ENCODE measurements at regions of chr15 and their contacts with region 1.

Region 1: GRCh38 chr15:55897560-55898336 is 95.7 kb downstream of the NEDD4 start:
- DNase-seq: no peak
- H3K4me3 ChIP-seq: no peak overlapping the region
- H3K27me3 ChIP-seq: no peaks in the 10 kb centered on the region
- CTCF ChIP-seq: peak; percentile 81

Region 2: DNA sequence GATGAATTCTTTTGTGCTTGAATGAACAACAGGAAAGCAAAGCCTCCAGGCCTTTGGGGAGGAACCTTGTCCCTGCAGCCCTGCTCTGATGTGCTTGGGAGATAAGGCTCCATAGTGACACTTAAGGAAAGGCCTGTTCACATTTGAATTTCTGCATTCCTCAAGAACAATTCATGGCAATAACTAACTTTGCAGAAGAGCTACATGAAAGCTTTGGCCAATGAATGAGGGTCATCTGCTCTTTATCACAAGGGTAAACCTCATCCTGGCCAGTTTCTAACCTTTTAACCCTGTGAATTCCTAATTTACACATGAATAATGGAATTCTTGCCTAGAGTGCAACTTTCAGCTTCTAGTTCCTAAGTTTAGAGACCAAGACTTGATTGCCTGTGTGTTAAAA is 160.4 kb before region 1 on chr15:
- CTCF ChIA-PET with region 1: no interaction called
- POLR2A ChIA-PET with region 1: no interaction called
- DNase-seq: no peak
- H3K4me3 ChIP-seq: no peak overlapping the region
- H3K27me3 ChIP-seq: no peaks in the 10 kb centered on the region
- CTCF ChIP-seq: no peak

Region 3: GRCh38 chr15:55907797-55908196 is 10.0 kb after region 1 on chr15:
- CTCF ChIA-PET with region 1: interaction called, 28 read pairs
- POLR2A ChIA-PET with region 1: no interaction called
- DNase-seq: peak; percentile 93
- H3K4me3 ChIP-seq: 0 out of 2 replicates have a peak overlapping the region, but pooled peaks have one; percentile 9
- H3K27me3 ChIP-seq: no peaks in the 10 kb centered on the region
- CTCF ChIP-seq: no peak

Region 4: DNA sequence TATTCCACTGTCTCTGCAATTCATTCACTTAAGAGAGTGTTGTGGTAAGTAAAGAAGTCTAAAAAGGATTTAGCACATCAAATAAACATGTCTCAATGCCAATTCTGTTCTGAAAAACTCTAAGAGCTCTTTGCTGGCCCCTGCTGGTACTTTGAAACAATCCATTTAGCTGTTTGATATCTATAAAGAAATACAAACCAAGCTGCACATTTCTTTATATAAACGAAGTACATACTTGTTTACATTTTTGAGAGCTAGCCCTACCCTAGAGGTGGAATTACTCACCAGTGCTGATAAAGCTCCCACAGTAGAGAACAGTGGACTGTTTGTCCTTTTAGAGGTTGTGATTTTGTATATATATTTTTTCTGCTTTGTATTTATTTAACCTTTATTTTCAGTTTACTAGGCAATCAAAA is 20.1 kb after region 1 on chr15:
- CTCF ChIA-PET with region 1: interaction called, 28 read pairs
- POLR2A ChIA-PET with region 1: no interaction called
- DNase-seq: peak; percentile 70
- H3K4me3 ChIP-seq: no peak overlapping the region
- H3K27me3 ChIP-seq: no peaks in the 10 kb centered on the region
- CTCF ChIP-seq: peak; percentile 77

Region 5: DNA sequence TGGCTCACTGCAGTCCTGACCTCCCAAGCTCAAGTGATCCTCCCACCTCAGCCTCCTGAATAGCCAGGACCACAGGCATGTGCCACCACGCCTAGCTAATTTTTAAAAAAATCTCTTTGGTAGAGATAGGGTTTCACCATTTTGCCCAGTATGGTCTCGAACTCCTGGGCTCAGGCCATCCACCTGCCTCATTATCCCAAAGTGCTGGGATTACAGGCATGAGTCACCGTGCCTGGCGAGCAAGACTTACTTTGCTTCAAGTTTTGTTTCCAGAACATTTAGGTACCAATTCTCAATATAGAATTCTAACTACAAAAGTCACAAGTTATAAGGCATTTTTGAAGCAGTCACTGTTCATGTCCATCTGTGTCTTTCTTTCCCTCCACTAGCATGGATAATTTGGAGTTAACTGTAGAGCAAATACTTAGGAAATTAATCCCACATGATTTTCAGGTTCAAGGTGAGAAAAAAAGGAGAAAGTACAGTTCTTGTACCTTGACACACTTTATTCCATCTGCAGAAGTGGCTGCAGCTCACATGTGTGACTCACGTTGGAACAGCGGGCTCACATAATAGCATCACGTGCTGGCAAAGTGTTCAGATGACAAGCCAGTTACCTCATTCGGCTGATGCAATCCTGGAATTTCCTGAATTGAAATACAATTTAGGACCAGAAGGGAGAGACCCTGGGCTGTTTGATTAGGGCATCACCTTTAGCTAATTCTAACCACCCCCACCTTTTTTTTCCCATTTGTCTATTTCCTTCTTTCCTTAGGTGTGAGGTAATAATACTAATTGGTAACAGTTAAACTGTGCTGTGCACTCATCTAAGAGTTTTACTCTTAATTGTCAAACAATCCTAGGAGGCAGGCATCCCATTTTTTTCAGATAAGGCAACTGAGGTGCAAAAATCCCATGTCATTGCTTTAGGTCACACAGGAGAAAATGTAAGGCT is 142.6 kb after region 1 on chr15:
- CTCF ChIA-PET with region 1: no interaction called
- POLR2A ChIA-PET with region 1: interaction called, 11 read pairs
- DNase-seq: peak; percentile 82
- H3K4me3 ChIP-seq: no peak overlapping the region
- H3K27me3 ChIP-seq: no peaks in the 10 kb centered on the region
- CTCF ChIP-seq: no peak

Region 6: GRCh38 chr15:56052395-56053045 is 154.8 kb after region 1 on chr15:
- CTCF ChIA-PET with region 1: interaction called, 10 read pairs
- POLR2A ChIA-PET with region 1: no interaction called
- DNase-seq: no peak
- H3K4me3 ChIP-seq: no peak overlapping the region
- H3K27me3 ChIP-seq: no peaks in the 10 kb centered on the region
- CTCF ChIP-seq: peak; percentile 79

Region 7: GRCh38 chr15:56176996-56177395 is 279.2 kb after region 1 on chr15:
- CTCF ChIA-PET with region 1: no interaction called
- POLR2A ChIA-PET with region 1: no interaction called
- DNase-seq: no peak
- H3K4me3 ChIP-seq: no peak overlapping the region
- H3K27me3 ChIP-seq: no peaks in the 10 kb centered on the region
- CTCF ChIP-seq: no peak

Measured in BJ (cell line).